Head of caudate nucleus (tissue), 42 donors: ENCODE measurements at regions of chr5 and their contacts with region 1.

Region 1: DNA sequence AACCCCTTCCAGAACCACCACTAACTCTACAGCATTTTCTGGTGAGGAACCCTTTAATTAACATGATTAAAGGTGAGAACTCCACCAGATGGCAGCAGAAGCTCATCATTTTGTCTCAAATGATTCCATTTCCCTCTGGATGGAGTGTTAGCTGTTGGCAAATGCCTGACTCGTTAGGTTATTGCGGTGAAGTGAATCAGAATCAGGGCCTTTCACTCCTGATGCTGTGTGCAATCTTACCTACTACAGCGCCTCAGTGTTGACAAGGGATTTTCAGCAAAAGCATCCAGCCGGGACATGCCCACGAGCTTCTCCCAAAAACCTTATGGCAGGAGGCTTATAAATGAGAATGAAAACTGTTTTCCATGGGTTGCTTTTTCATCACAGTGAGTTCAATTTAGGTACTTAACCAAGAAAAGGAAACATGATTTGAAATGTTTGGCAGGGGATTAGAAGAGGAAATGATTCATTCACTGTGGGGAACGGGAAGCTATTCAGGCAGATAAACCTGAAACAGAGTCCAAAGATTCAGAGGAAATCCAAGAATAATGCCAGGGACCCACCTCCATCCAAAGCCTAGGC is 48.0 kb upstream of the CAST start:
- DNase-seq: peak in 38 of 42 donors; percentile 6 to 90 (median 61)

Region 2: DNA sequence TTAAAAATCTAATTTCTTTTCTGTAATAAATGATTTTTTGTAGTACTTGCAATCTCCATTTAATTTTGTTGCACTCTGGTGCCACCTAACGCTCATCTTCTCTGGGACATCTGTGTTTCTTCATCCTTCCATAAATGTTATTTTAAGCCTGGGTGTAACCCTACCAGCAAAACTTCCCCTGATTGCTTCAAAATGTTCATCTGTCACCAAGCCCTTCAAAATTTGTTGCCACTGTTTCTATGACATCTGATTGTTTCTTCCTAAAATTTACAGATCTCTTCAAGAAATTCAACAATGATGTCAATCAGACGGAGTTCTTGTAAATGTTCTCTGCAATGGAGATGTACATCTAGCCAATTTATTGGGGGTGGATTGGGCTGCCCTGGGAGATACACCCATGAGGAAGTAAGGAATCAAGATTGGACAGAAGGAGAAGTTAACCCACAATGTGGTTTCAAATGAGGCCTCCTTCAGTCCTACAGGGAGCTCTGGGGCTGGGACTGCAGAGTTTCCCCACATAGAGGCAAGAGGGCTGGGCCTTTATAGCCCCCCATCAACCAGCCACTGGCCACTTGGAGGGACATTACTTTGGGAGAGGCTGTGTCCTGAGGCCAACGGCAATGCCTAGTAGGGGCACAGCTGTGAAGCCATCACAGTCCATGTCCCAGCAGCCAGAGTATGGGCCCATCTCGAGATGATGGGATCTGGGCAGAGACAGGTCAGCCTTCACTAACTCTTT is 1352.6 kb before region 1 on chr5:
- intact Hi-C with region 1: no loop called
- DNase-seq: peak in 19 of 42 donors; percentile 12 to 67 (median 46)

Region 3: GRCh38 chr5:96687812-96688453 is 73.7 kb after region 1 on chr5:
- intact Hi-C with region 1: loop called (anchors 10 kb)
- DNase-seq: peak in 1 of 42 donors; percentile 25

Region 4: DNA sequence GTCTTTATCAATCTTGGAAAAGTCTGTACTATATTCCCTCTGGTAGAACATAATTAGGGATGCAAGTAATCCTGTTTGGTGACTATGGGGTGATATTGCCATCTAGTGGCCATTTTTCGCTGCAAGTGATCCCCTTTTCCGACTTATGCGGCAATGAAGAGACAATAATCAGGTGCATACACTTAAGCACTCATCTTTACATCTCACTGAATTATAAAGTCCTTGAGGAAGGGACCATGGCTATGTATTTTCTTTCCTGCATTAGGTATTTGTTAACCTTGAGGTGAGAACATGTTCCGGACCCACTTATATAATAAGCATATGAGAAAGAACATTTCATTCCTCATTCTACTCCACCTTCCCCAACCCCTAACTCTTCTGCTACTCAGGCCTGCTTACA is 547.8 kb after region 1 on chr5:
- intact Hi-C with region 1: loop called (anchors 10 kb)
- DNase-seq: peak in 39 of 42 donors; percentile 17 to 91 (median 72)